ENCODE measurements at regions of chrX and their contacts with region 1.

Region 1: DNA sequence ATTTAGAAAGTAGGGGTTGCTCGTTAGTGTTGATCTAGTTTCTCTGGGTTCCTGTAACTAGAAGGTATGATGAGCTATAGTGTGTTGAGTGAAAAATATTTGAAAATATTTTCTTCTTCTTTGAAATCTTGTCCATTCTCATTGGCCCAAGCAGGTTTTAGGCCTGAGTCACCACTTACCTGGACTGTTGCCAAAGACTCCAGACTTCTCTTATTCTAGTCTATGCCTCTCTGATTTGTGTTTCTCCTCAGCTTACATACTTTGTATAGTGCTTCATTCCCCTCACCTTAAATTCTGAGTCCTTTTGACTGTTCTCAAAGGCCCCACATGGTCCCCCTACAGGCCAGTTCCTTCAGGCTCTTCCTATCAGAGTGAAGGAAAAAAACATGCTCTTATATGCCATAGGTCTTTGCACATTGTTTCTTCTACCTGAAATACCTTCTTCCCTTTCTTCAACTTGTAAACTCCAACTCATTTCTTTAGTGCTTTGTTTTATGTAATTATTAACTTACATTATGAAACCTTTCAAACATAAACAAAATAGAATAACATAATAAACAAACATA is 258.2 kb downstream of the PPP1R2C start:
- DNase-seq: peak; percentile 65
- H3K4me3 ChIP-seq: no peak overlapping the region
- H3K27ac ChIP-seq: no peak overlapping the region
- H3K4me1 ChIP-seq: peaks cover 25% of the 10 kb centered on the region
- H3K27me3 ChIP-seq: no peaks in the 10 kb centered on the region

Region 2: DNA sequence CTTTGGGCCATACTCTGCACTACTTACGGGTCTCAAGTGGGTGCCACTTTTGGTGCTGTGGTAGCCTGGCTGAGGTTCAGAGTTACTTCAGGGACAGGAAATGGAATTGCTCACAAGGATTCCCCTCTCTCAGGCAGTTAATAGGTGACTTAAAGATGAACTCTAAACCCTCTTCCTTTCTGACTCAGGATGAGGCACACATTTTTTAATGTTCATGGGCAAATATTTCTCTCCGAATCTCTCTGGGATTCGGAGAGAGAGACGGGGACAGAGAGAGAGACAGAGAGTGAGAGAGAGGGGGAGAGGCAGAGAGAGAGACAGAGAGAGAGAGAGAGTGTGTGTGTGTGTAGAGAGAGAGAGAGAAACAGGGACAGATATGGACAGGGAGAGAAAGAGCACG is 992.8 kb before region 1 on chrX:
- in situ Hi-C with region 1: loop called (anchors 25 kb)
- DNase-seq: peak; percentile 42
- H3K4me3 ChIP-seq: peak overlapping the region; percentile 29; the same call in 1 of the 2 replicates
- H3K27ac ChIP-seq: peak overlapping the region; percentile 41
- H3K4me1 ChIP-seq: peaks cover 14% of the 10 kb centered on the region
- H3K27me3 ChIP-seq: no peaks in the 10 kb centered on the region

Region 3: DNA sequence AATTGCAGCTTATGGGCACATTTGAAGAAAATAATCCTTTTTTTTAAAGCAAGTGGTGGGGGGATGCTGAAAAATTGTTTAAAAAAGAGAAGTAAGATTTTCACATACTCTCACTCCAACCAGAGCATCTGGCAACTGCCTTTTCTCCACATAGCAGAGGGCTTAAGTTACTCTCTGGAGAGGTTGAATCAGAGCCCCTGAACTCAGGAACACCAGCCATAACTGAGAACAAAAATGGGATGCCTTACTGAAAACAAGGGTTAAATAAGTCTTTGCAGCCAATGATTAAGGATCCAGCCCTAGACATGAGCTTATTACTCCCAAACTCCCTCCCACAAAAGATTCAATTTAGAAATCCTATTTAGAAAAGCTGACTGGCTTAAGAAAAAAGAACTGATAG is 623.9 kb before region 1 on chrX:
- in situ Hi-C with region 1: no loop called
- DNase-seq: peak; percentile 7
- H3K4me3 ChIP-seq: no peak overlapping the region
- H3K27ac ChIP-seq: no peak overlapping the region
- H3K4me1 ChIP-seq: no peaks in the 10 kb centered on the region
- H3K27me3 ChIP-seq: no peaks in the 10 kb centered on the region

Region 4: DNA sequence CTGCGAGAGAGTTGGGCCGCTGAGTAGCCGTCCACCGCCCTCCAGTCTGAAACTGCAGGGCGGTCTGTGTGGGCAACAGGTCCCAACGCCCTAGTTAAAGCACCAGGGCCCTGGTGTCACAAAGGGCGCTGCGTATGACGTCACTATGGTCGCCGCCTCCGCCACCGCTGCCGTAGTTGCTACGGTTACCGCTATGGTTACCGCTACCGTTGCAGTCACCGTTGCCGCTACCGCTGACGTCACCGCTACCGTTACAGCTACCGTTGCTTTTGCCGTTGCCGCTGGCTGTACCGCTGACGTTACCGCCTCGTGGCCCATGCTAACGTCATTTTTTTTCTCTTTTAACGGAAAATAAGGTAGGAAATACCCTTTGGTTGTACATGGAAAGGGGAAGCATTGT is 258.3 kb after region 1 on chrX and contains the start of gene PPP1R2C:
- in situ Hi-C with region 1: no loop called
- DNase-seq: no peak
- H3K4me3 ChIP-seq: no peak within 1 kb of the TSS
- H3K27ac ChIP-seq: no peak within 1 kb of the TSS
- H3K4me1 ChIP-seq: no peaks in the 10 kb centered on the region
- H3K27me3 ChIP-seq: no peaks in the 10 kb centered on the region
- total RNA-seq, gene PPP1R2C: not detected in 2 replicates

Measured in GM23248 (cell line).